ENCODE measurements at regions of chr5 and their contacts with region 1.

Region 1: DNA sequence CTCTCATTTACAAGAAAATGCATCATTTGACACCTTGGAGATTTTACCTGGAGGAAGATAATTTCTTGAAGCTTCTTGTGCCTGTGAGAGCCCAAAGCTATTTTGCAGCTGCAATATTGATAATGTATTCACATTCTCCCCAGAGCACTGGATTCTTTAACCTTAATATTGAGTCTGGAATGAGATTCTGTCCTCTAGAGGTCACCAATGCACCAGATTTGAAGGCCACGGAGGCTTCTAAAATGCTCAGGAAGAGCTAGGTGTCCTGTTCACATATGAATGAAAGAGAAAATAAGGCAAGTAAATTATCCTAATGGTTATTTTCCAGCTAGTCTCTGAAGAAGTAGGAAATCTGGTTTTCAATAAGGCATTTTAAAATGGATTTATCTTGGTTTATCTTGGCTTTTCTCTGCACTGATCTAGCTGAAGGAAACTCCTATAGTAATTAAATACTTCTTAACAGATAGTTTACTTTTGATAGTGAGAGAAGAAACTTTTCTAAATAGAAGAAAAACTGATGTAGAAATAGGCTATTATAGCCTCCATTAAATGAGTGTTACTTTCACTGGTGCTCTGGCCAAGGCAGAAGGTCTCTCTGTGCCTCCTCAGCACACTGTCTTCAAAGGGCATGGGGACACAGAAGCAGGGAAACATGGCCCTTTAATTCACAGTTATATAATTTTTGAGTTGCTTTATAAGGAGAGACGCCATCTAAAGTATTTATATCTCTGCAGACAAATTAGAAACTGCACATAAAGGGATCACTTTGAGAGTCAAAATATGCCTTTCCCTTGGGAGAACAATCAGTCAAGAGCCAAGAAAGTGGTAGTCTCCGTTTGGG is 297.0 kb upstream of the ACTBL2 start:
- DNase-seq: peak; percentile 69
- H3K4me3 ChIP-seq: no peak overlapping the region
- H3K27ac ChIP-seq: no peak overlapping the region
- H3K4me1 ChIP-seq: peaks cover 17% of the 10 kb centered on the region
- H3K27me3 ChIP-seq: no peaks in the 10 kb centered on the region
- CTCF ChIP-seq: peak; percentile 56 to 68

Region 2: GRCh38 chr5:57499262-57500050 is 280.1 kb before region 1 on chr5:
- CTCF ChIA-PET with region 1: interaction called, 7 read pairs
- dilution Hi-C with region 1: no loop called
- in situ Hi-C with region 1: loop called (anchors 10 to 25 kb)
- intact Hi-C with region 1: loop called (anchors 1 kb)
- DNase-seq: peak; percentile 63
- H3K4me3 ChIP-seq: peak overlapping the region in 2 of 3 experiments; percentile 36 to 39
- H3K27ac ChIP-seq: no peak overlapping the region
- H3K4me1 ChIP-seq: peaks cover 24% of the 10 kb centered on the region
- H3K27me3 ChIP-seq: no peaks in the 10 kb centered on the region
- CTCF ChIP-seq: peak; percentile 87 to 89

Region 3: GRCh38 chr5:57552033-57552432 is 227.6 kb before region 1 on chr5:
- CTCF ChIA-PET with region 1: no interaction called
- dilution Hi-C with region 1: no loop called
- in situ Hi-C with region 1: no loop called
- intact Hi-C with region 1: no loop called
- DNase-seq: peak; percentile 78
- H3K4me3 ChIP-seq: no peak overlapping the region
- H3K27ac ChIP-seq: no peak overlapping the region
- H3K4me1 ChIP-seq: no peaks in the 10 kb centered on the region
- H3K27me3 ChIP-seq: peaks cover 2% of the 10 kb centered on the region
- CTCF ChIP-seq: no peak

Region 4: DNA sequence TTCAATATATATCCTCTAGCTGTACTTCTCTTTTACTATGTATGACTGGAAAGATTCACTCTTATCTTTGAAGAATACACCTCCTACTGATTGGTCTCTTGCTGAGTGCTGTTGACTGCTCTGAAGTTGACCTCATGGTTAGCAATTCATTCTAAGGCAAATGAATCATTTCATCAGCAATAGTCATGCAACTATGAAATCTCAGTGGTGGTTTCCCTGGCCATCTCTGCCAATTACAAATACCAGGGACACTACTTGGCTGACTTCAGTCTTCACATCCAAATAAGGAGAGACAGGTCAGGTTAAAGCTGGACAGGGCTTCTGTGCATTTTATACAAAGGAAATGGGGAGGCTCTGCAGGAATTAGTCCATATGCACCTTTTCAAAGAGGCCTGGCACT is 36.5 kb after region 1 on chr5:
- CTCF ChIA-PET with region 1: interaction called, 3 read pairs
- dilution Hi-C with region 1: no loop called
- in situ Hi-C with region 1: no loop called
- intact Hi-C with region 1: loop called (anchors 1 kb)
- DNase-seq: peak; percentile 97
- H3K4me3 ChIP-seq: no peak overlapping the region
- H3K27ac ChIP-seq: peak overlapping the region; percentile 86
- H3K4me1 ChIP-seq: peaks cover 24% of the 10 kb centered on the region
- H3K27me3 ChIP-seq: no peaks in the 10 kb centered on the region
- CTCF ChIP-seq: no peak

Region 5: GRCh38 chr5:57887851-57888621 is 108.4 kb after region 1 on chr5:
- CTCF ChIA-PET with region 1: interaction called, 25 read pairs
- dilution Hi-C with region 1: no loop called
- in situ Hi-C with region 1: no loop called
- intact Hi-C with region 1: loop called (anchors 1 kb)
- DNase-seq: peak; percentile 72
- H3K4me3 ChIP-seq: no peak overlapping the region
- H3K27ac ChIP-seq: peak overlapping the region; percentile 75
- H3K4me1 ChIP-seq: peaks cover 30% of the 10 kb centered on the region
- H3K27me3 ChIP-seq: no peaks in the 10 kb centered on the region
- CTCF ChIP-seq: peak; percentile 85 to 88

Region 6: GRCh38 chr5:58071566-58071965 is 292.0 kb after region 1 on chr5:
- CTCF ChIA-PET with region 1: no interaction called
- dilution Hi-C with region 1: no loop called
- in situ Hi-C with region 1: no loop called
- intact Hi-C with region 1: no loop called
- DNase-seq: no peak
- H3K4me3 ChIP-seq: no peak overlapping the region
- H3K27ac ChIP-seq: no peak overlapping the region
- H3K4me1 ChIP-seq: no peaks in the 10 kb centered on the region
- H3K27me3 ChIP-seq: no peaks in the 10 kb centered on the region
- CTCF ChIP-seq: no peak

Region 7: GRCh38 chr5:58188262-58188651 is 408.7 kb after region 1 on chr5:
- CTCF ChIA-PET with region 1: no interaction called
- dilution Hi-C with region 1: no loop called
- in situ Hi-C with region 1: no loop called
- intact Hi-C with region 1: loop called (anchors 2 kb)
- DNase-seq: peak; percentile 91
- H3K4me3 ChIP-seq: no peak overlapping the region
- H3K27ac ChIP-seq: peak overlapping the region; percentile 86
- H3K4me1 ChIP-seq: peaks cover 44% of the 10 kb centered on the region
- H3K27me3 ChIP-seq: no peaks in the 10 kb centered on the region
- CTCF ChIP-seq: peak; percentile 33 to 45

Region 8: DNA sequence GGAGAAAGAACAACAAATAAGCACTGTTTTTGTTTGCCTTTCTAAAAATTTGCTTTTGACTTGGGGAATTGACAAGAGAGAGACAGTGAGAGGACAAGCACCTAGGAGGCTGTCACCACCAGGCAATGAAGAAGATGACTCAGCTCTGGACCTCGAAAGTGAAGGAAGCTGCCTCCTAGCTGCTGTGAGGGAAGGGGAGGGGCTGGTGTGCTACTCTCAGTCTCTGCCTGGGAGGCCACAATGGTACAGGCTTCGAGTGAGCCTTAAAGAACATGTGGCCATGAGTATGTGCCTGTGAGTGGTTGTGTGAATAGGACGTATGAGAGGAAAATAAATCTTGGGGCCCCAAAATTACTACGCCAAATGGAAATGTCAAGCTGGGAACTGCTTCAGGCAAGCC is 687.3 kb after region 1 on chr5:
- CTCF ChIA-PET with region 1: no interaction called
- dilution Hi-C with region 1: no loop called
- in situ Hi-C with region 1: loop called in 1 of 2 experiments (anchors 5 kb)
- intact Hi-C with region 1: no loop called
- DNase-seq: no peak
- H3K4me3 ChIP-seq: no peak overlapping the region
- H3K27ac ChIP-seq: no peak overlapping the region
- H3K4me1 ChIP-seq: peaks cover 6% of the 10 kb centered on the region
- H3K27me3 ChIP-seq: no peaks in the 10 kb centered on the region
- CTCF ChIP-seq: peak in 1 of 2 donors; percentile 19

Measured in mammary epithelial cell (primary cell).